ENCODE measurements at regions of chr3 and their contacts with region 1.

Region 1: GRCh38 chr3:171646357-171647133 is 163.7 kb downstream of the PLD1 start:
- DNase-seq: no peak
- H3K4me3 ChIP-seq: no peak overlapping the region
- H3K27ac ChIP-seq: no peak overlapping the region
- H3K4me1 ChIP-seq: no peaks in the 10 kb centered on the region
- H3K27me3 ChIP-seq: no peaks in the 10 kb centered on the region
- CTCF ChIP-seq: peak in 3 of 4 experiments; percentile 53 to 76 (median 71)
- POLR2A ChIP-seq: no peak

Region 2: GRCh38 chr3:171772427-171773056 is 126.0 kb after region 1 on chr3:
- intact Hi-C with region 1: loop called (anchors 2 kb)
- DNase-seq: peak; percentile 51
- H3K4me3 ChIP-seq: no peak overlapping the region
- H3K27ac ChIP-seq: no peak overlapping the region
- H3K4me1 ChIP-seq: no peaks in the 10 kb centered on the region
- H3K27me3 ChIP-seq: no peaks in the 10 kb centered on the region
- CTCF ChIP-seq: peak; percentile 54 to 76 (median 68)
- POLR2A ChIP-seq: no peak

Region 3: DNA sequence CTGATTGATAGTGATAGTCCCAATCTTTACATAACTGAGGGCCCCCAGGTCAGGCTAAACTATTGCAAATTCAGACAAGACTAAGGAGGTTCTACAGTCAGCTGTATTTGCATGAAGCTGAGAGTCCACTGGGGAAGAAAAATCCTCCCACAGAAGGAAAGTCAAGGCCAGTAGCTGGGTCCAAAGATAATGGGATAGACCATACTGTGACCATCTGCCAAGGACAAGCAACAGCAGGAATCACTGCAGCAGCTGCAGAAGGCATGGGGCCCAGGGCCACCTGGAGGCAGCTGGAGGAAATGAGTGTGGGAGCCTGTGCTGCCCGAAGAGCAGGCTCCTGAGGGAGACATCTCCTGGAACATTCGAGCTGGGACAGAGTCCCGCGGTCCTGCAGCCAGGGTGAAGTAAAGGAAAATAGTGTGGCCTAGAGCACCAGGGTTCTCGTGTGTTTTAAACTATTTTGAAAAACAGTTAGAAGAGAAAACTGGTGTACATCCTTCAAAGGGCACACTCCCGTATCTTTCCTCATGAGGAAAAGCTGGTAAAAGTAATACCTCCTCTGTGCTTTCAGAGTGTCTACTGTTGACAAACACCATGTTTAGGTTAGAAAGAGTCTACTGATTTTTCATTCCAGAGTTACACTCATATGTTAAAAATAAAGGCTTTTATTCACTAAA is 183.4 kb after region 1 on chr3:
- intact Hi-C with region 1: loop called (anchors 5 kb)
- DNase-seq: peak; percentile 38
- H3K4me3 ChIP-seq: no peak overlapping the region
- H3K27ac ChIP-seq: no peak overlapping the region
- H3K4me1 ChIP-seq: no peaks in the 10 kb centered on the region
- H3K27me3 ChIP-seq: no peaks in the 10 kb centered on the region
- CTCF ChIP-seq: peak in 2 of 4 experiments; percentile 62 to 69
- POLR2A ChIP-seq: no peak

Region 4: GRCh38 chr3:172476347-172476746 is 829.8 kb after region 1 on chr3:
- intact Hi-C with region 1: loop called (anchors 10 kb)
- DNase-seq: no peak
- H3K4me3 ChIP-seq: no peak overlapping the region
- H3K27ac ChIP-seq: no peak overlapping the region
- H3K4me1 ChIP-seq: no peaks in the 10 kb centered on the region
- H3K27me3 ChIP-seq: no peaks in the 10 kb centered on the region
- CTCF ChIP-seq: no peak
- POLR2A ChIP-seq: no peak